ENCODE measurements at regions of chr17 and their contacts with region 1.

Region 1: DNA sequence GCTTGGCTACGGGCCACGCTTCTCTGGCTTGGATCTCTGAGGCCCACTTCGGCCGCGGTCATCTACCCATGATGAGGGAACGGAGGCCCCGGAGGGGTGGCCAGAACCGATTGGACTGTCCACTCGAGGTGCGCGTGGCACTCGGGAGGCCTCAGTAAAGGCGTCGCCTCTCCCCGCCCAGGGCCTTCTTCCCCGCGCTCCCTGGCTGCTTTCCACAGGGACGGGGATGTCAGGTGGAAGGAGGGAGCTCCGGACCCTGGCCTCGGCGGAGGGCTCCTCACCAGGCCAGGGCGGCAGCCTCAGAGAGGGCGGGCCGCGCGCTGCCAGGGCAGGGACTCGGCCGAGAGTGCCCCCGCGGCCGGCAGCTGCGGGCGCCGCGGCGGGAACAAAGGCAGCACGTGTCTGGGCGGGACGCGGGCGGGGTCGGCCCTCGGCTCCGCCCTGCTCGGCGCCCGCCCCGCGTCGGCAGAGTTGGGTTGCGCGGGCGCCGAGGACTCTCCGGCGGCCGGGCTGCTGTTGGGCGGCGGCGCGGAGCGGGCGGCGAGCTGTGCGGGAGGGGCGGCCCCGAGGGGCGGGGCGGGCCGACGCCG is 587 bp upstream of the CDK5R1 start:
- DNase-seq: peak; percentile 78 to 88 (median 82)
- H3K4me3 ChIP-seq: peak overlapping the region in 1 of 4 donors; percentile 86
- H3K27ac ChIP-seq: peak overlapping the region; percentile 77 to 96 (median 93)
- H3K4me1 ChIP-seq: peaks cover 24 to 26% of the 10 kb centered on the region in 2 donors
- H3K27me3 ChIP-seq: no peaks in the 10 kb centered on the region
- CTCF ChIP-seq: no peak
- POLR2A ChIP-seq: peak in 1 of 2 donors; percentile 80

Region 2: GRCh38 chr17:32536736-32537643 is 50.8 kb after region 1 on chr17:
- intact Hi-C with region 1: no loop called
- DNase-seq: peak in 2 of 7 donors; percentile 17 to 39
- H3K4me3 ChIP-seq: no peak overlapping the region
- H3K27ac ChIP-seq: peak overlapping the region in 2 of 5 donors; percentile 53 to 57
- H3K4me1 ChIP-seq: peaks cover 0 to 14% of the 10 kb centered on the region in 2 donors
- H3K27me3 ChIP-seq: no peaks in the 10 kb centered on the region
- CTCF ChIP-seq: no peak
- POLR2A ChIP-seq: no peak

Region 3: DNA sequence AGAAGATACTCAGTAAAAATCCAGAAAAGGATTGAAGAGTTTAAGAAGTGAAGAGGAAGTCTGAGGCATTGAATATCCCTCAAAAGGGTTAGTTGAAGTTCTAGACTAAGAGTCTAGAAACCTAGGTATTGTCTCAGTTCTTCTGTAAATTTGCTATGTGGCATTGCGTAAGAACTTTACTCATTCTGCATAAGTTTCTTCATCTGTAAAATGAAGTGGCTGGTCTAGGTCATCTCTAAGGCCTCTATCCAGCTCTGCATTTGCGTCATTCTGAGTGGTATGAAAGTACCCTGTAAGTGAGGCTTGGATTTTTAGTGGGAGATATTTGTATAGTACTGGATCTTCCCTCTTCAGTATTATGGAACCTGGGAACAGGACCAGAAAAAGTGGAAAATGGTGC is 260.5 kb after region 1 on chr17:
- intact Hi-C with region 1: loop called (anchors 10 kb)
- DNase-seq: no peak
- H3K4me3 ChIP-seq: no peak overlapping the region
- H3K27ac ChIP-seq: no peak overlapping the region
- H3K4me1 ChIP-seq: peaks cover 0 to 11% of the 10 kb centered on the region in 2 donors
- H3K27me3 ChIP-seq: no peaks in the 10 kb centered on the region
- CTCF ChIP-seq: no peak
- POLR2A ChIP-seq: no peak

Region 4: DNA sequence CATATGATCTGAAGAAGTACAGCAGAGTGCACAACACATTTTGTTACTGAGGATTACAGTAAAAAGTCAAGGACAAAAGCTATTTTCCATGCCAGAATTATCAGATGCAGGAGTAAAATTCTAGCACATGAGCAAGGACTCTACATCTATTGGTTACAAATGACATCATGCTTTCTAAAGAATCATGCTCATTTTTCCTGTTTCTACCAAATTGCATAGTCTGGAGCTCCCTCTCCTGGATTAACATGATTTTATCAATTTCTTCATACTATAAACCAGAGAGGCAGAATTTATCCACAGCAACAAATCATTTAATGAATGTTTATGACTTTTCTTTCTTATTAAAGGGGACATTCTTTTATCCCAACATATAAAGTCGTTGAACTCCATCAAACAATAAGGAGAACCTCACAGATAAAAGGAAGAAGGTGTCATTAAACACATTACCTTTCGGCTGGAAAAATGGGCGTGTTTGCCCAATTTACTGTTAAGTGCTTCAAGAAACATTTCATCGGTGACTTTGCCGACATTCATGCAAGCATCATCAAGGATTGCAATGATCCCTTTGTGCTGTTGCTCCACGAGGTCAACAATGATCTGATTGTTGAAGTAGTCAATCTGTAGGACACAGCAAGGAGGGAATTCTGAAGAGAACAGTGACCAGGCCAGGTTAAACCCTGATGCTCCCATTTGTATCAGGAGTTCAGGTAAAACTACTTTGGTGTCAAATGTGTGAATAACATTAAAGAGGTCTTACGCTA is 269.0 kb after region 1 on chr17:
- intact Hi-C with region 1: loop called in 1 of 2 experiments (anchors 10 kb)
- DNase-seq: no peak
- H3K4me3 ChIP-seq: no peak overlapping the region
- H3K27ac ChIP-seq: peak overlapping the region in 4 of 5 donors; percentile 48 to 79 (median 65)
- H3K4me1 ChIP-seq: peaks cover 0 to 11% of the 10 kb centered on the region in 2 donors
- H3K27me3 ChIP-seq: no peaks in the 10 kb centered on the region
- CTCF ChIP-seq: peak; percentile 41 to 93 (median 78)
- POLR2A ChIP-seq: peak in 1 of 2 donors; percentile 26